K562 (cell line): ENCODE measurements at regions of chr3 and their contacts with region 1.

Region 1: GRCh38 chr3:179562591-179563270 is at the start of gene ACTL6A:
- DNase-seq: peak; percentile 99 to 100 (median 99)
- ATAC-seq: peak; percentile 96
- H3K4me3 ChIP-seq: peak within 1 kb of the TSS; percentile 79
- H3K27ac ChIP-seq: peak within 1 kb of the TSS; percentile 93
- H3K4me1 ChIP-seq: peaks cover 8 to 9% of the 10 kb centered on the region in 2 experiments; a peak in 3 of 5 replicates
- H3K27me3 ChIP-seq: no peaks in the 10 kb centered on the region
- CTCF ChIP-seq: no peak
- EP300 ChIP-seq: no peak
- POLR2A ChIP-seq: peak; percentile 98
- RAD21 ChIP-seq: no peak
- polyA plus RNA-seq, gene ACTL6A: 229 to 243 TPM

Region 2: GRCh38 chr3:178915365-178915764 is 647.4 kb before region 1 on chr3:
- CTCF ChIA-PET with region 1: no interaction called
- POLR2A ChIA-PET with region 1: no interaction called
- in situ Hi-C with region 1: no loop called
- intact Hi-C with region 1: no loop called
- DNase-seq: no peak
- ATAC-seq: no peak
- H3K4me3 ChIP-seq: no peak overlapping the region
- H3K27ac ChIP-seq: no peak overlapping the region
- H3K4me1 ChIP-seq: no peaks in the 10 kb centered on the region
- H3K27me3 ChIP-seq: no peaks in the 10 kb centered on the region
- CTCF ChIP-seq: no peak
- EP300 ChIP-seq: no peak
- POLR2A ChIP-seq: no peak
- RAD21 ChIP-seq: no peak

Region 3: GRCh38 chr3:179015551-179016020 is 547.1 kb before region 1 on chr3:
- CTCF ChIA-PET with region 1: interaction called, 12 read pairs
- POLR2A ChIA-PET with region 1: interaction called, 4 read pairs
- in situ Hi-C with region 1: loop called (anchors 25 kb)
- intact Hi-C with region 1: loop called (anchors 2 kb)
- DNase-seq: peak; percentile 56 to 87 (median 64)
- ATAC-seq: peak; percentile 92
- H3K4me3 ChIP-seq: no peak overlapping the region
- H3K27ac ChIP-seq: no peak overlapping the region
- H3K4me1 ChIP-seq: peaks cover 0 to 6% of the 10 kb centered on the region in 2 experiments; a peak in 2 of 5 replicates
- H3K27me3 ChIP-seq: no peaks in the 10 kb centered on the region
- CTCF ChIP-seq: peak; percentile 80 to 91 (median 85)
- EP300 ChIP-seq: no peak
- POLR2A ChIP-seq: no peak
- RAD21 ChIP-seq: peak; percentile 96 to 97

Region 4: DNA sequence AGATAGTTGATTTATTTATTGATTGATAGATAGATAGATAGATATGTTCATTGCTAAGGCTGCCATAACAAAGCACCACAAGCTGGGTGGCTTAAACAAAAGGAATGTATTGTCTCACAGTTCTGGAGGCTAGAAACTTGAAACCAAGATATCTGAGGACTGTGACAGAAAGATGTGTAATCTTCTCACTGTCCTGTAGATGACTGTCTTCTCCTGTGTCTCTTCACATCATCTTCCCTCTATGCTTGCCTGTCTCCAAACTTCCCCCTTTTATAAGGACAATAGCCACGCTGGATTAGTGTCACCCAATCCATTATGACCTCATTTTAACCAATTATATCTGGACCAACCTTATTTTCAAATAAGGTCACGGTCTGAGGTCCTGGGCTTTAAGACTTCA is 152.4 kb before region 1 on chr3:
- CTCF ChIA-PET with region 1: no interaction called
- POLR2A ChIA-PET with region 1: interaction called, 3 read pairs
- in situ Hi-C with region 1: no loop called
- intact Hi-C with region 1: loop called (anchors 1 kb)
- DNase-seq: peak in 1 of 4 experiments; percentile 8
- ATAC-seq: peak; percentile 77
- H3K4me3 ChIP-seq: no peak overlapping the region
- H3K27ac ChIP-seq: no peak overlapping the region
- H3K4me1 ChIP-seq: no peaks in the 10 kb centered on the region
- H3K27me3 ChIP-seq: no peaks in the 10 kb centered on the region
- CTCF ChIP-seq: peak; percentile 1 to 44 (median 18); a peak in 2 of 6 replicates
- EP300 ChIP-seq: no peak
- POLR2A ChIP-seq: no peak
- RAD21 ChIP-seq: peak in 1 of 2 experiments; percentile 49; a peak in 2 of 4 replicates

Region 5: GRCh38 chr3:179421500-179421899 is 141.2 kb before region 1 on chr3:
- CTCF ChIA-PET with region 1: interaction called, 10 read pairs
- POLR2A ChIA-PET with region 1: no interaction called
- in situ Hi-C with region 1: no loop called
- intact Hi-C with region 1: loop called (anchors 1 kb)
- DNase-seq: peak in 2 of 4 experiments; percentile 15 to 34
- ATAC-seq: peak; percentile 71; the same call in 2 of the 3 replicates
- H3K4me3 ChIP-seq: no peak overlapping the region
- H3K27ac ChIP-seq: no peak overlapping the region
- H3K4me1 ChIP-seq: no peaks in the 10 kb centered on the region
- H3K27me3 ChIP-seq: no peaks in the 10 kb centered on the region
- CTCF ChIP-seq: peak; percentile 30 to 49 (median 35); a peak in 4 of 6 replicates
- EP300 ChIP-seq: no peak
- POLR2A ChIP-seq: no peak
- RAD21 ChIP-seq: peak; percentile 45 to 62

Region 6: GRCh38 chr3:179451265-179452175 is 111.2 kb before region 1 on chr3 and contains the start of gene GNB4:
- CTCF ChIA-PET with region 1: interaction called, 5 read pairs
- POLR2A ChIA-PET with region 1: no interaction called
- in situ Hi-C with region 1: no loop called
- intact Hi-C with region 1: loop called (anchors 2 kb)
- DNase-seq: peak; percentile 82 to 89 (median 86)
- ATAC-seq: peak; percentile 94
- H3K4me3 ChIP-seq: peak within 1 kb of the TSS; percentile 77
- H3K27ac ChIP-seq: peak within 1 kb of the TSS; percentile 76
- H3K4me1 ChIP-seq: peaks cover 11 to 21% of the 10 kb centered on the region in 2 experiments; a peak in 4 of 5 replicates
- H3K27me3 ChIP-seq: peaks cover 4 to 16% of the 10 kb centered on the region in 2 experiments; a peak in 2 of 5 replicates
- CTCF ChIP-seq: no peak
- EP300 ChIP-seq: no peak
- POLR2A ChIP-seq: peak; percentile 66
- RAD21 ChIP-seq: no peak
- polyA plus RNA-seq, gene GNB4: 6.8 to 7.2 TPM